ENCODE measurements at regions of chr6 and their contacts with region 1.

Region 1: DNA sequence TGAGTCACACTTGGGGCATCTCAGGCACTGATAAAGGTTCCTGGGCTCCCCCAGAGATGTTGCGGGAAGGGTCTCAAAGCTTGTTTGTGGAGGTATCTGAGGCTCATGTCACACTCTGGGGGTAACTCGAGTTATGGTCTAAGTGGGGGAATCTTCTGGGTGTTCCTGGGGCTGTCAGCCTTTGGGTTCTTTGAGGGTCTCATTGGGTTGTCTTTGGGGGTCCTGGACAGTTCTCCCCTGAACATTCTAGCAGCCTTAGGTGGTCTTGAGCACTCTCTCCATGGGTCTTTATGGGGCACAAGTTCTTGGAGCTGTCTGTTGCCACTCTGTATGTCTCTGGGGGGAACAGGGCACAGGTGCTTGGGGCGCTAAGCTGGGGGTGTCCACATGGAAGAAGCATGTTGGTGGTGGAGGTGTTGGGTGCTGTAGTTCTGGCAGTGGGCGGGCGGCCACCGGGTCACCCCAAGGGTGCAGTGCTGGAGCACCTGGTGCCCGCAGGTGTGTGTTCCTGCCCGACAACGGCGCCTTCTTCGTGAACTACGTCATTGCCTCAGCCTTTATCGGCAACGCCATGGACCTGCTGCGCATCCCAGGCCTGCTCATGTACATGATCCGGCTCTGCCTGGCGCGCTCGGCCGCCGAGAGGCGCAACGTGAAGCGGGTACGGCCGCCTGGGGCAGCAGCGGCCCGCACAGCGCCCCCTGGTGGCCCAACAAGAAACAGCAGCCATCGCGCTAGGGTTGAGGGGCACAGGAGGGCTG is 7.1 kb upstream of the CAPN11 start:
- DNase-seq: peak; percentile 71
- H3K4me3 Mint-ChIP-seq: no peak overlapping the region
- H3K27ac Mint-ChIP-seq: no peak overlapping the region
- H3K4me1 Mint-ChIP-seq: peaks cover 12% of the 10 kb centered on the region
- H3K27me3 Mint-ChIP-seq: no peaks in the 10 kb centered on the region

Region 2: GRCh38 chr6:43491750-43492661 is 659.5 kb before region 1 on chr6:
- intact Hi-C with region 1: no loop called
- DNase-seq: no peak
- H3K4me3 Mint-ChIP-seq: no peak overlapping the region
- H3K27ac Mint-ChIP-seq: no peak overlapping the region
- H3K4me1 Mint-ChIP-seq: peaks cover 35% of the 10 kb centered on the region
- H3K27me3 Mint-ChIP-seq: no peaks in the 10 kb centered on the region

Region 3: GRCh38 chr6:43737272-43738081 is 414.1 kb before region 1 on chr6:
- intact Hi-C with region 1: no loop called
- DNase-seq: no peak
- H3K4me3 Mint-ChIP-seq: no peak overlapping the region
- H3K27ac Mint-ChIP-seq: no peak overlapping the region
- H3K4me1 Mint-ChIP-seq: peaks cover 10% of the 10 kb centered on the region
- H3K27me3 Mint-ChIP-seq: no peaks in the 10 kb centered on the region

Region 4: GRCh38 chr6:44096612-44097011 is 54.9 kb before region 1 on chr6:
- intact Hi-C with region 1: loop called (anchors 1 kb)
- DNase-seq: peak; percentile 59
- H3K4me3 Mint-ChIP-seq: no peak overlapping the region
- H3K27ac Mint-ChIP-seq: no peak overlapping the region
- H3K4me1 Mint-ChIP-seq: peaks cover 7% of the 10 kb centered on the region
- H3K27me3 Mint-ChIP-seq: no peaks in the 10 kb centered on the region

Measured in activated T-helper 1 cell treated with anti-CD3 and anti-CD28 coated beads, Interleukin-12 subunit alpha, Interleukin-12 subunit beta, Interleukin-2, Interleukin-4 antibody, amounts not matched to agents 30 ng/mL and 10 ng/mL and 1 ng/mL, durations not matched to agents 14 hours and 24 hours and 36 hours (primary cell).